Mammary epithelial cell (primary cell): ENCODE measurements at regions of chr1 and their contacts with region 1.

Region 1: GRCh38 chr1:25080294-25081209 is 150.5 kb upstream of the RUNX3 start:
- DNase-seq: peak; percentile 56
- H3K4me3 ChIP-seq: no peak overlapping the region
- H3K27ac ChIP-seq: no peak overlapping the region
- H3K4me1 ChIP-seq: no peaks in the 10 kb centered on the region
- H3K27me3 ChIP-seq: no peaks in the 10 kb centered on the region
- CTCF ChIP-seq: no peak

Region 2: GRCh38 chr1:24964811-24965570 is 115.6 kb before region 1 on chr1:
- CTCF ChIA-PET with region 1: no interaction called
- dilution Hi-C with region 1: no loop called
- in situ Hi-C with region 1: no loop called
- intact Hi-C with region 1: no loop called
- DNase-seq: no peak
- H3K4me3 ChIP-seq: no peak overlapping the region
- H3K27ac ChIP-seq: no peak overlapping the region
- H3K4me1 ChIP-seq: no peaks in the 10 kb centered on the region
- H3K27me3 ChIP-seq: no peaks in the 10 kb centered on the region
- CTCF ChIP-seq: no peak

Region 3: DNA sequence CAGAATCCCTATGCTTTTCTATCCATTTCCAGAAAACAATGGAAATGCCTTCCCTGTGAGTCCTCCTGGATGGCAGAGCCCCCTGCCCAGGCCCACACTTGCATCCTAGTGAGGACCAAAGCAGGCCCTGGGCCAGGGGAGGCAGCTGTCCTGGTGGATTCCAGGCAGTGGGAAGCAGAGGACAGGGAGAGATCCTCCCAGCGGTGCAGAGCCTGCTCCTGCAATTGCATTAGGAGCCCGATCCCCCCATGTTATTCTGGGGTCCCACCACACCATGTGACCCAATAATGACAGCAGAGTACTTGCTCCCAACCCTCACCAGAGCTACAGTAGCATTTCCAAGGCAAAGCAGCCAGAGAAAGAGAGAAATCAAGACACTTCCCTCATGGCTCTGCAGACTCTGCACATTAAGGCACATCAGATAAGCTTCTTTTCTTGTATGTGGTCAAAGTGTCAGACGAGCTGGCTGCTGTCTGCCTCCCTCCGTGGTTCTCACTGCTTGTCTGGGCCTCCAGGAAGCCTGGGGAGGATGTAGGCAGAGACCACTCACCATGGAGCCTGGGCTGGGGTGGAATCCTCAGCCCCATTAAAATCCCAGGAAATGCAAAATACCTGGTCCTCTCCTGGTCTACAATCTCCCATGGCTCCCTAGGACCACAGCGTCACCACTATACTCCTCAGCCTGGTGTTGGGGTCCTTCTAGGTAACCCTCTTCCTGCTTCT is 95.6 kb before region 1 on chr1:
- CTCF ChIA-PET with region 1: no interaction called
- dilution Hi-C with region 1: no loop called
- in situ Hi-C with region 1: no loop called
- intact Hi-C with region 1: no loop called
- DNase-seq: no peak
- H3K4me3 ChIP-seq: no peak overlapping the region
- H3K27ac ChIP-seq: no peak overlapping the region
- H3K4me1 ChIP-seq: peaks cover 8% of the 10 kb centered on the region
- H3K27me3 ChIP-seq: no peaks in the 10 kb centered on the region
- CTCF ChIP-seq: no peak

Region 4: GRCh38 chr1:25022361-25023189 is 58.0 kb before region 1 on chr1:
- CTCF ChIA-PET with region 1: no interaction called
- dilution Hi-C with region 1: loop called (anchors 5 kb)
- in situ Hi-C with region 1: no loop called
- intact Hi-C with region 1: no loop called
- DNase-seq: peak; percentile 97
- H3K4me3 ChIP-seq: no peak overlapping the region
- H3K27ac ChIP-seq: no peak overlapping the region
- H3K4me1 ChIP-seq: peaks cover 10% of the 10 kb centered on the region
- H3K27me3 ChIP-seq: peaks cover under 1% of the 10 kb centered on the region
- CTCF ChIP-seq: no peak

Region 5: DNA sequence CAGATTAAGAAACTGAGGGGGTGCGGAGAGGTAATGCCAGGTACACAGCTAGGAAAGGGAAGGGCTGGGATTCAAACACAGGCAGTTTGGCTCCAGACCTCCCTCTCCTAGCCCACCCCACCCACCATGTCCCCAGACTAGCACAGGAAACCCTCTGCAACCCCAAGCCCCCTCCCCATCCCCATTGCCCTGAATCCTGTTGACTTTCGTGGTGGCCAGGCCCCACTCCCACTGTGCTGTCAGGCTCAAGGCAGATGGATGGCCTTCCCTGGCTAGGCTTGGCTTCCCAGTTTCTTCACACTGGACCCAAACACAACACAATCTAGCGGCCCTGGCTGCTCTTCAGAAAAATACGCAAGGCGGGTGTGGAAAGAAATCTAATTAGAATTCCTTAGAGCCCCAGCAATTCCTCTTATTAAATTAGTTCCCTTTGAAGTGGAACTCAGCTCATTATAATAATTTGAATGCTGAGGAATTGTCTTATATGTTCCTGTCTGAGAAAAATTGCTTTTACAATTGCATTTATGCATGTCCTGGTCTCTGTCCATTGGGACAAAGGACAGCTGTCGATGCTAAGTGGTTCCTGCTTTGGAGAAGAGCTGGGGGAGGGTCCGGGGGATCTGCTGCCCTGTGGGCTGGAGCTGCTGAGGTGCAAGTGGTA is 54.4 kb after region 1 on chr1:
- CTCF ChIA-PET with region 1: no interaction called
- dilution Hi-C with region 1: loop called (anchors 5 kb)
- in situ Hi-C with region 1: no loop called
- intact Hi-C with region 1: no loop called
- DNase-seq: no peak
- H3K4me3 ChIP-seq: no peak overlapping the region
- H3K27ac ChIP-seq: no peak overlapping the region
- H3K4me1 ChIP-seq: peaks cover 17% of the 10 kb centered on the region
- H3K27me3 ChIP-seq: no peaks in the 10 kb centered on the region
- CTCF ChIP-seq: no peak

Region 6: GRCh38 chr1:25161981-25162380 is 81.4 kb after region 1 on chr1:
- CTCF ChIA-PET with region 1: no interaction called
- dilution Hi-C with region 1: loop called (anchors 5 kb)
- in situ Hi-C with region 1: no loop called
- intact Hi-C with region 1: no loop called
- DNase-seq: no peak
- H3K4me3 ChIP-seq: no peak overlapping the region
- H3K27ac ChIP-seq: no peak overlapping the region
- H3K4me1 ChIP-seq: peaks cover 2% of the 10 kb centered on the region
- H3K27me3 ChIP-seq: no peaks in the 10 kb centered on the region
- CTCF ChIP-seq: no peak